Mucosa of descending colon (tissue), 3 donors: ENCODE measurements at regions of chr3 and their contacts with region 1.

Region 1: DNA sequence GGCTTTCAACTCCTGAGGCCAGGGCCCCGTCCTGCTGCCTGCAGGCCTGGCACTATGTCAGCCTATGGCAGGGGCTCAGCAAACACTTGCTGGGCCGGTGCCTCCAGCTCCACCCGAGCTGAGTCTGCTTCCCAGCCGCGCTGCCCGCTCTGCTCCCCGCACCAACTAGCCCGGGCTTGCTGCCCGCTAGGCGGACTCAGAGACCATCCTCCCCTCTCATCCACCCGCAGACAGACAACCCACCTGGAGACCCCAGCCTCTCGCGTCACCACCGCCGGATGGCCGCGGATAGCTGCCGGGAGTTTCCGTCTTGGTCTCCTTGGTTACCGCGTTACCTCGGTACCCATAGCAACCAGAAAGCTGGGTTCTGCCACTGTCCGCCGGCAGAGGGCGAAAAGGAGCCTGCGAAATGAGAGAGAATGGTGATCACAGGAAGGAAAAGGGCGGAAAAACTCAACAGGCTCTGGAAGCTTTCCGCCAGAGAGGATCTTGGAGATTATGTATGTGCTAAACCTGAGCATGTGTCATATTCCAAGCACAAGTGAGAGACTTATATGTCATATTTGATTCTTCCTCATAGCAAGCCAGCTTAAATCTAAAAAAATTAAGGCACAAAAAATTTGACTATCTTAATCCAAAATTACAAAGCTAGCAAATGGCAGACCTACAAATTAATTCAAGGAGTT is at the start of gene ZBBX:
- DNase-seq: peak; percentile 81 to 93 (median 92)
- ATAC-seq: peak; percentile 100
- H3K4me3 ChIP-seq: no peak within 1 kb of the TSS
- H3K4me1 ChIP-seq: no peaks in the 10 kb centered on the region
- CTCF ChIP-seq: peak; percentile 62
- total RNA-seq, gene ZBBX: not detected

Region 2: GRCh38 chr3:167450195-167450594 is 70.0 kb after region 1 on chr3:
- intact Hi-C with region 1: no loop called
- DNase-seq: peak in 1 of 3 donors; percentile 2
- ATAC-seq: no peak
- H3K4me3 ChIP-seq: no peak overlapping the region
- H3K4me1 ChIP-seq: no peaks in the 10 kb centered on the region
- CTCF ChIP-seq: no peak

Region 3: GRCh38 chr3:167882067-167882667 is 502.0 kb after region 1 on chr3:
- intact Hi-C with region 1: loop called in 1 of 2 experiments (anchors 5 kb)
- DNase-seq: peak in 1 of 3 donors; percentile 13
- ATAC-seq: peak; percentile 31
- H3K4me3 ChIP-seq: no peak overlapping the region
- H3K4me1 ChIP-seq: no peaks in the 10 kb centered on the region
- CTCF ChIP-seq: peak; percentile 28